ENCODE measurements at regions of chr12 and their contacts with region 1.

Region 1: GRCh38 chr12:120904197-120904773 is at the start of gene SPPL3:
- H3K4me3 Mint-ChIP-seq: peak within 1 kb of the TSS; percentile 98
- H3K27ac Mint-ChIP-seq: peak within 1 kb of the TSS; percentile 85
- H3K4me1 Mint-ChIP-seq: peaks cover 40% of the 10 kb centered on the region
- H3K27me3 Mint-ChIP-seq: no peaks in the 10 kb centered on the region

Region 2: DNA sequence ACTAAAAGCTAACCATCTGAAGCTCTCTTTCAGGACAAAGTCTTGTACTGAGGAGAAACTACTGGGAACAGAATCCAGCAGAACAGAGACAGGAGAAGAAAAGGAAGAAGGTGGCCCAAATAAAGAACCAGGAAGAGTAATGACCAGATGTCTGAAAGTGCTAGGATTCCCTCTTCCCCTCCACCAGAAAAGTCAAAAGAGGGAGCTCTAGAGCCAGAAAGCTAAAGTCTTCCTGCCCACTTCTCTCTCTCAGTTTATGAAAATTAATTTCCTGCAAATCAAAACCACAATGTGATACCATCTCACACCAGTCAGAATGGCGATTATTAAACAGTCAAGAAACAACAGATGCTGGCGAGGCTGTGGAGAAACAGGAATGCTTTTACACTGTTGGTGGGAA is 47.3 kb before region 1 on chr12:
- intact Hi-C with region 1: loop called (anchors 5 kb)
- H3K4me3 Mint-ChIP-seq: no peak overlapping the region
- H3K27ac Mint-ChIP-seq: peak overlapping the region; percentile 72
- H3K4me1 Mint-ChIP-seq: peaks cover 47% of the 10 kb centered on the region
- H3K27me3 Mint-ChIP-seq: no peaks in the 10 kb centered on the region

Region 3: GRCh38 chr12:120936196-120936595 is 31.9 kb after region 1 on chr12:
- intact Hi-C with region 1: loop called (anchors 2 kb)
- H3K4me3 Mint-ChIP-seq: peak overlapping the region; percentile 62
- H3K27ac Mint-ChIP-seq: peak overlapping the region; percentile 86
- H3K4me1 Mint-ChIP-seq: peaks cover 84% of the 10 kb centered on the region
- H3K27me3 Mint-ChIP-seq: no peaks in the 10 kb centered on the region

Measured in dendritic cell treated with granulocyte-macrophage colony-stimulating factor and Interleukin-4, amounts not matched to agents 40 ng/mL and 50 ng/mL, for 4 days (primary cell).